CD4-positive, alpha-beta T cell (primary cell): ENCODE measurements at regions of chr5 and their contacts with region 1.

Region 1: DNA sequence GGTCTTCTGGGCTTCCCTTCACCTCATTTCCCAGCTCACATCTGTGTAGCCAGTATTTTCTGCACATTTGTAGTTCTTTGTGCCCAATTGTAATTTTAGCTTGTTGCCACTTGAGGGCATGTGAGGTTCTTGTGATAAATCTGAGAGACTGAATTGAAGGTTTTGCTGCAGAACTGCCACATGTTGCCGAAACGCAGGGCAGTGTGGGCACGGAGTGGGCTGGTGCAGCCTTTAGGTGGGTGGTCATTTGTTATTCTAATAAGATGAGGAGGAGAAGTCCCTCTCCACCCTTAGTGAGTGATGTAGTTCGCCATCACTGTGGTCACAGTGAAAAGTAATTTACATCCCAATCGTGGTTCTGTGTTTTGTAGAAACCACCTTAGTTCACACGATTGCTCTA is 21.2 kb downstream of the OTULIN start:
- DNase-seq: peak in 9 of 14 experiments; percentile 15 to 75 (median 30)
- ATAC-seq: peak; percentile 89
- H3K4me3 ChIP-seq: no peak overlapping the region
- H3K4me3 Mint-ChIP-seq: peak overlapping the region; percentile 49
- H3K27ac ChIP-seq: no peak overlapping the region
- H3K27ac Mint-ChIP-seq: peak overlapping the region; percentile 62
- H3K4me1 ChIP-seq: peaks cover 5% of the 10 kb centered on the region
- H3K4me1 Mint-ChIP-seq: peaks cover 16% of the 10 kb centered on the region
- H3K27me3 ChIP-seq: no peaks in the 10 kb centered on the region
- H3K27me3 Mint-ChIP-seq: no peaks in the 10 kb centered on the region
- CTCF ChIP-seq: peak; percentile 86

Region 2: DNA sequence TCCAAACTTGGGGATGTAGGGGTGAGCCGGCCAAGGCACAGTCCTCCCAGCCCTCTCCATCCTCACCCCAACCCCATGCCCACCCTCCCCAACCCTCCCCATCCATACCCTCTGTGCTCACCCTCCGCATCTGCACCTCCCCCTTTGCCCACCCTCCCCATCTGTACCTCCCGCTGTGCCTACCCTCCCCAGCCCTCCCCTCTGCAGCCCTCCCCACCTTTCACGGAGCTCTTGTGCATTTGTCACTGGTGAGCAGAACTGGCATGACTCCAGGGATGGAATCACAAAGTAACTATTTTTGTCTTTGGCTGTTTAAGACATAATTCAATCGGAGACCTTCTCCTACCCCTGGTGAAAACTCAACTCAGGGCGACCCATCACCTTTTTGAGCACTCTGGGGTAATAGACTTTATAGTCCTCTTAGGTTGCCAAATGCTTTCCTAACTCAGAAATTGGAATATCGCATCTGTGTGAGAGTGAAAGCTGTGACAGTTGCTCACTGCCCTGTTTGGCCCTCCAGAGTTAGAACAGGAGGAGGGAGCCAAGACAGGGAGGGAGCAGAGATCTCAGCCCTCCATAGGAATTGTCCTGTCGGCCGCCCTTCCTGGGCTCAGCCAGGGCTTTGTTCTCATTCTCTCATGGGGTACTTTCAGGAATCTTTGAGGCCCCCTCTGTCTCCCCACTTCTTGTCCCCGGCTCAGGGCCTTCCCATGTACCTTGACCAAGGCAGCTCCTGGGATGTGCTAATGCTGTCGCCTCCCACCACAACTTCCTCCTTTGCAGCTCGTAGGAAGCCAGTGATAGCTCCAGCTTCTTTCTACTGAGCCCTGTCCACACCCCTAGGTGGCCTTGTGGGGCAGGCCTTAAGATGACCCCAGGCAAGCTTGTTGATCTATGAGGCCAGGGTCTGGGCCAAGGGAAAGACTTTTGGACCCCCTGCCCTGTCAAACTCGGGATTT is 15.0 kb after region 1 on chr5:
- CTCF ChIA-PET with region 1: interaction called, 28 read pairs
- POLR2A ChIA-PET with region 1: interaction called, 20 read pairs
- intact Hi-C with region 1: no loop called
- DNase-seq: no peak
- ATAC-seq: no peak
- H3K4me3 ChIP-seq: no peak overlapping the region
- H3K4me3 Mint-ChIP-seq: no peak overlapping the region
- H3K27ac ChIP-seq: peak overlapping the region in 1 of 2 donors; percentile 37
- H3K27ac Mint-ChIP-seq: peak overlapping the region; percentile 96
- H3K4me1 ChIP-seq: peaks cover 48% of the 10 kb centered on the region
- H3K4me1 Mint-ChIP-seq: peaks cover 82% of the 10 kb centered on the region
- H3K27me3 ChIP-seq: no peaks in the 10 kb centered on the region
- H3K27me3 Mint-ChIP-seq: no peaks in the 10 kb centered on the region
- CTCF ChIP-seq: no peak

Region 3: DNA sequence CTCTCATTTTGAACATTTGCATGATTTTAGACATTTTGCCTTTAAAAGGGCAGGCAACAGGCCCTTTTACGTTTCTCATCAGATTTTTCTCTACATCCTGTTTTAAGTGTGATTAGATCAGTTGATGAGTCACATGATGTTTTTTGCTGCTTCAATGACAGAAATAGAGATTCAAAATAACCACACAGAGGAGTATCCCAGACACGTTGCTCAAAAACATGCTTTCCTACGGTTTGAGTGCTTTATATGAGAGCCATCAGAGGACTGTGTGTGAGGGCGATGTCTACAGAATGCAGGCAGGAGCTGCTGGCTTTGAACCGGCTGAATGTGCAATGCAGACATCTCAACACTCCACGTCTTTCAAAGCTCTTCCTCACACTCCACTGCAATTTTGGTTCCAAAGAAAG is 20.9 kb after region 1 on chr5:
- CTCF ChIA-PET with region 1: interaction called, 28 read pairs
- POLR2A ChIA-PET with region 1: interaction called, 20 read pairs
- intact Hi-C with region 1: loop called in 1 of 2 experiments (anchors 1 kb)
- DNase-seq: peak; percentile 32 to 84 (median 57)
- ATAC-seq: peak; percentile 95
- H3K4me3 ChIP-seq: peak overlapping the region; percentile 7
- H3K4me3 Mint-ChIP-seq: peak overlapping the region; percentile 84
- H3K27ac ChIP-seq: peak overlapping the region; percentile 85 to 87
- H3K27ac Mint-ChIP-seq: peak overlapping the region; percentile 96
- H3K4me1 ChIP-seq: peaks cover 73% of the 10 kb centered on the region
- H3K4me1 Mint-ChIP-seq: peaks cover 93% of the 10 kb centered on the region
- H3K27me3 ChIP-seq: no peaks in the 10 kb centered on the region
- H3K27me3 Mint-ChIP-seq: no peaks in the 10 kb centered on the region
- CTCF ChIP-seq: no peak

Region 4: DNA sequence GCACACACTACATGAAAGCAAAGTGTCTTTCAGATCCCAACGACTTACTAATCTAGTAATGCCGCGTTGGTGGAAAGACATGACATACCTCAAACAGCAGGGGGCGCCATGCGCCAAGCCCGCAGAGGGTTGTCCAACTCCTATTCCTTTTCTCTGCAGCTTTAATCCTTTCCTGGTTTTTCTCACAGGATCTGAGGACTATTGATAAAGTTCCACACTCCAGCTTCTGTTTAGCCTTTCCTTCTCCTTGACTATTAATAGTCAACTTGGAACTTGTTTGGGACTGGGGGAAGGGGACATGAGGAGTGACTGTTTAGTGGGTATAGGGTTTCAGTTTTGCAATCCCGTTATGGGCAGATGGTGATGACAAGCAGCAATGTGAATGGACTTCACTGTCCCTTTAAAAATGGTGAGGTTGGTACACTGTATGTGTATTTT is 41.7 kb after region 1 on chr5:
- CTCF ChIA-PET with region 1: interaction called, 11 read pairs
- POLR2A ChIA-PET with region 1: interaction called, 3 read pairs
- intact Hi-C with region 1: loop called (anchors 1 kb)
- DNase-seq: peak; percentile 48 to 87 (median 69)
- ATAC-seq: peak; percentile 88
- H3K4me3 ChIP-seq: no peak overlapping the region
- H3K4me3 Mint-ChIP-seq: no peak overlapping the region
- H3K27ac ChIP-seq: no peak overlapping the region
- H3K27ac Mint-ChIP-seq: peak overlapping the region; percentile 67
- H3K4me1 ChIP-seq: peaks cover 4% of the 10 kb centered on the region
- H3K4me1 Mint-ChIP-seq: peaks cover 11% of the 10 kb centered on the region
- H3K27me3 ChIP-seq: no peaks in the 10 kb centered on the region
- H3K27me3 Mint-ChIP-seq: no peaks in the 10 kb centered on the region
- CTCF ChIP-seq: peak; percentile 98

Region 5: GRCh38 chr5:14946815-14947640 is 261.3 kb after region 1 on chr5:
- CTCF ChIA-PET with region 1: interaction called, 3 read pairs
- POLR2A ChIA-PET with region 1: no interaction called
- intact Hi-C with region 1: loop called (anchors 5 kb)
- DNase-seq: peak in 11 of 14 experiments; percentile 7 to 79 (median 25)
- ATAC-seq: peak; percentile 99
- H3K4me3 ChIP-seq: no peak overlapping the region
- H3K4me3 Mint-ChIP-seq: no peak overlapping the region
- H3K27ac ChIP-seq: no peak overlapping the region
- H3K27ac Mint-ChIP-seq: no peak overlapping the region
- H3K4me1 ChIP-seq: no peaks in the 10 kb centered on the region
- H3K4me1 Mint-ChIP-seq: peaks cover 8% of the 10 kb centered on the region
- H3K27me3 ChIP-seq: no peaks in the 10 kb centered on the region
- H3K27me3 Mint-ChIP-seq: peaks cover 14% of the 10 kb centered on the region
- CTCF ChIP-seq: peak; percentile 58

Region 6: GRCh38 chr5:15003511-15003920 is 317.8 kb after region 1 on chr5:
- CTCF ChIA-PET with region 1: interaction called, 13 read pairs
- POLR2A ChIA-PET with region 1: interaction called, 6 read pairs
- intact Hi-C with region 1: loop called in 1 of 2 experiments (anchors 1 kb)
- DNase-seq: peak; percentile 23 to 84 (median 40)
- ATAC-seq: peak; percentile 100
- H3K4me3 ChIP-seq: no peak overlapping the region
- H3K4me3 Mint-ChIP-seq: no peak overlapping the region
- H3K27ac ChIP-seq: no peak overlapping the region
- H3K27ac Mint-ChIP-seq: no peak overlapping the region
- H3K4me1 ChIP-seq: no peaks in the 10 kb centered on the region
- H3K4me1 Mint-ChIP-seq: peaks cover 6% of the 10 kb centered on the region
- H3K27me3 ChIP-seq: no peaks in the 10 kb centered on the region
- H3K27me3 Mint-ChIP-seq: no peaks in the 10 kb centered on the region
- CTCF ChIP-seq: peak; percentile 81

Region 7: DNA sequence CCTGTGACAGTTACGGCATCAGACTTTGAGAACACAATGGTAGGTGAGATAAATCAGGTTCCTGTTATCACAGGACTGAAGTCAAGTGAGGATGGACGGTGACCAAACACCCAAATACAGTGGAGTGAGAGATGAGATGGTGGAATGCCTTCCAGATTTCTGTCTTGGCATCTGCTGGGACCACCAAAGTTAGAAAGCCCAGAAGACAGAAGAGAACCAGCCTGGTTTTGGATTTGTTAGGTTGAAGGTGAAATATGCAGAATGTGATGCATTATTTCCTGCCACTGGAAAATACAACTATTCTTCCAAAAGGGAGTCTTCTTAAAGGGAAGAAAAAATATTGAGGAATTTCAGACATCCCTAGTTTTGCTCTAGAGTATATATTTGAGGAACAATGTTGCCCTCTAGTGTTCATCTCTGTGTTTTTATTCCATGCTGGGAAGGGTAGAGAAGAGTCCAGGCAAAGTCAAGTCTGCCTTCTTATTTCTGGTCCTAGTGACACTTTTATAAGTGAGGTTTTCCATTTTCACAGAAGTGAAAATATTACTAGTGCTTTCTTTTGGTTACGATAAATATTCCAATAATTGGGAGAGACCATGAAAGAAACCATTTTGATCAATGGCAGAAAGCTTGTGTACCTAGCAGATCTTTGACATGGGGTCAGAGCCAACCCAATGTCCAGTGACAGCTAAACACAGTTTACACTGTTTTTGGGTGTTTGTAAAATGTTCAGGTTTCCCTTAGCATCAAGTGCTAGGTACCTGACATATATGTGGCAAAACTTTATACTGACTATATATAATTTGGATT is 328.1 kb after region 1 on chr5:
- CTCF ChIA-PET with region 1: interaction called, 4 read pairs
- POLR2A ChIA-PET with region 1: no interaction called
- intact Hi-C with region 1: loop called in 1 of 2 experiments (anchors 1 kb)
- DNase-seq: peak in 3 of 14 experiments; percentile 52 to 59 (median 57)
- ATAC-seq: peak; percentile 55
- H3K4me3 ChIP-seq: no peak overlapping the region
- H3K4me3 Mint-ChIP-seq: no peak overlapping the region
- H3K27ac ChIP-seq: no peak overlapping the region
- H3K27ac Mint-ChIP-seq: no peak overlapping the region
- H3K4me1 ChIP-seq: no peaks in the 10 kb centered on the region
- H3K4me1 Mint-ChIP-seq: no peaks in the 10 kb centered on the region
- H3K27me3 ChIP-seq: no peaks in the 10 kb centered on the region
- H3K27me3 Mint-ChIP-seq: no peaks in the 10 kb centered on the region
- CTCF ChIP-seq: peak; percentile 85